Heart left ventricle (tissue), 16 donors: ENCODE measurements at regions of chr5 and their contacts with region 1.

Region 1: DNA sequence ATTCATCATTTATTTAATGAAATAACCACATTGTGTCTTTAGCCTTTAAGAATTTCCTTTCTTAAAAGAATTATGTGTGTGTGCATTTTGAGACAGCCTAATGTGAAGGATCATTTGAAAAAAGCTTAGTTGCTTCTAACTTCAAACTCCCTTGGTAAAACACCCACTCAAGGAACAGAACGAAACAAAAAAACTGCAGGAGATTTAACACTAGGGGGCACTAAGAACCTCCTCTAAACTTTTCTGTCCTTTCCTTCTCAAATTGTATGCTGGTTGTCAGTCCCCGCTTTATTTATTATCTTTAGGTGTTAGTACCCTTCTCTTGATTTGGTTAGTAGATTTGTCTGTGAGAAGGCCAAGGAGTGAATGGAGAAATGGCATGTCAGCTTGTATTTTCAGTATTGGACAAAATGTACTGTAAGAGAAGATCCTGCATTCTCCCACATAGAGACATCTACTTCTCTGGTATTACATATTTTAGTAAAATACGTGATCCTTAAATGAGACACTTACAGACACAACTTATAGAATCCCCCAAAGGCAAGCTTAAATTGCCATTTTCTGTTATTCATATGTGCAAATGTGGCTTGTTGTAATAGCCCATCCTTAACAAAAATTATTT is 229.7 kb downstream of the MRPS30 start:
- DNase-seq: no peak
- ATAC-seq: peak in 1 of 4 donors; percentile 49
- H3K4me3 ChIP-seq: no peak overlapping the region
- H3K27ac ChIP-seq: no peak overlapping the region
- H3K4me1 ChIP-seq: no peaks in the 10 kb centered on the region
- H3K27me3 ChIP-seq: no peaks in the 10 kb centered on the region
- CTCF ChIP-seq: peak; percentile 41 to 74 (median 66)
- POLR2A ChIP-seq: no peak

Region 2: DNA sequence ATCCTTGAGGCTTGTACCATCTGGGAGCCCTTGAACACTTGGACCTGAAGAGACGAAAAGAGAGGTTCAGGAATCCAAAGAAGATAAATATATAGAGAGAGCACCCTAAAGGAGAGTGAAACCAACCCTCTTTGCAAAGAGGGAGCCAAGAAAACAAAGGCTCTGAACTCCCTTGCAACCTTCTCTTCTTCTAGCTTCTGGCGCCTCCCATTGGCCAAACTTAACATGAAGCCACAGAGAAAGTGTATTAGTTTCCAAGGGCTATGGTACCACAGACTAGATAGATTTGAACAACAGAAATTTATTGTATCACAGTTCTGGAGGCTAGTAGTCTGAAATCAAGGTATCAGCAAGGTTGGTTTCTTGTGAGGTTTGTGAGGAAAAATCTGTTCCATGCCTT is 482.6 kb after region 1 on chr5:
- intact Hi-C with region 1: loop called (anchors 2 to 5 kb)
- DNase-seq: peak in 2 of 5 donors; percentile 19 to 23
- ATAC-seq: peak in 3 of 4 donors; percentile 53 to 63 (median 60)
- H3K4me3 ChIP-seq: no peak overlapping the region
- H3K27ac ChIP-seq: no peak overlapping the region
- H3K4me1 ChIP-seq: no peaks in the 10 kb centered on the region
- H3K27me3 ChIP-seq: no peaks in the 10 kb centered on the region
- CTCF ChIP-seq: peak; percentile 9 to 57 (median 45)
- POLR2A ChIP-seq: no peak

Region 3: DNA sequence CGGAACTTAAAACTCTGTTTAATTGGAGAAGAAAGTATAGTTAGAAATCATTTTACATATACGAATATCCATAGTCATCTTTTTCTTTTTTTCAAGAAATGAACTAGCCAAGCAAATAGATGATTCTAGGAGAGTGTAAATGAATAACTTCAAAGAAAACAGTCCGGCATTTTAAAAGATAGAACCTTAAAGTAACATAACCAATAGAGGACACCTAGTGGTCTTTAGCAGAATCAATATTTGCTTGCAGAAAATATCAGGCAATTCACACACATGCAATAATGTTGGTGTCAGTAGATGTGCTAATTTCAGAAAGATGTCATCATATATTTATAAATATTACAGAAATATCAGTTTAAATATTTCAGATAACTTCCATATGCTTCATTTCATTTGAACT is 600.6 kb after region 1 on chr5:
- intact Hi-C with region 1: loop called in 5 of 10 experiments (anchors 5 to 10 kb)
- DNase-seq: no peak
- ATAC-seq: no peak
- H3K4me3 ChIP-seq: no peak overlapping the region
- H3K27ac ChIP-seq: no peak overlapping the region
- H3K4me1 ChIP-seq: no peaks in the 10 kb centered on the region
- H3K27me3 ChIP-seq: no peaks in the 10 kb centered on the region
- CTCF ChIP-seq: peak in 7 of 12 donors; percentile 14 to 38 (median 31)
- POLR2A ChIP-seq: no peak

Region 4: GRCh38 chr5:45696206-45696836 is 657.8 kb after region 1 on chr5 and contains the start of gene HCN1:
- intact Hi-C with region 1: loop called in 5 of 10 experiments (anchors 1 to 5 kb)
- DNase-seq: peak; percentile 59 to 83 (median 79)
- ATAC-seq: peak; percentile 96 to 100 (median 100)
- H3K4me3 ChIP-seq: peak within 1 kb of the TSS in 9 of 12 donors; percentile 13 to 52 (median 29)
- H3K27ac ChIP-seq: no peak within 1 kb of the TSS
- H3K4me1 ChIP-seq: peaks cover 0 to 19% (median 7%) of the 10 kb centered on the region in 12 donors
- H3K27me3 ChIP-seq: peaks cover 4 to 56% (median 23%) of the 10 kb centered on the region in 9 donors
- CTCF ChIP-seq: peak; percentile 54 to 81 (median 68)
- POLR2A ChIP-seq: no peak
- total RNA-seq, gene HCN1: 0.09 to 0.41 (median 0.14) TPM in 4 of 9 donors, not detected in the others

Region 5: GRCh38 chr5:45774528-45774927 is 736.1 kb after region 1 on chr5:
- intact Hi-C with region 1: loop called in 1 of 10 experiments (anchors 5 kb)
- DNase-seq: no peak
- ATAC-seq: no peak
- H3K4me3 ChIP-seq: no peak overlapping the region
- H3K27ac ChIP-seq: no peak overlapping the region
- H3K4me1 ChIP-seq: no peaks in the 10 kb centered on the region
- H3K27me3 ChIP-seq: no peaks in the 10 kb centered on the region
- CTCF ChIP-seq: peak in 8 of 12 donors; percentile 22 to 41 (median 32)
- POLR2A ChIP-seq: no peak